Left colon (tissue), 2 donors: ENCODE measurements at regions of chr4 and their contacts with region 1.

Region 1: DNA sequence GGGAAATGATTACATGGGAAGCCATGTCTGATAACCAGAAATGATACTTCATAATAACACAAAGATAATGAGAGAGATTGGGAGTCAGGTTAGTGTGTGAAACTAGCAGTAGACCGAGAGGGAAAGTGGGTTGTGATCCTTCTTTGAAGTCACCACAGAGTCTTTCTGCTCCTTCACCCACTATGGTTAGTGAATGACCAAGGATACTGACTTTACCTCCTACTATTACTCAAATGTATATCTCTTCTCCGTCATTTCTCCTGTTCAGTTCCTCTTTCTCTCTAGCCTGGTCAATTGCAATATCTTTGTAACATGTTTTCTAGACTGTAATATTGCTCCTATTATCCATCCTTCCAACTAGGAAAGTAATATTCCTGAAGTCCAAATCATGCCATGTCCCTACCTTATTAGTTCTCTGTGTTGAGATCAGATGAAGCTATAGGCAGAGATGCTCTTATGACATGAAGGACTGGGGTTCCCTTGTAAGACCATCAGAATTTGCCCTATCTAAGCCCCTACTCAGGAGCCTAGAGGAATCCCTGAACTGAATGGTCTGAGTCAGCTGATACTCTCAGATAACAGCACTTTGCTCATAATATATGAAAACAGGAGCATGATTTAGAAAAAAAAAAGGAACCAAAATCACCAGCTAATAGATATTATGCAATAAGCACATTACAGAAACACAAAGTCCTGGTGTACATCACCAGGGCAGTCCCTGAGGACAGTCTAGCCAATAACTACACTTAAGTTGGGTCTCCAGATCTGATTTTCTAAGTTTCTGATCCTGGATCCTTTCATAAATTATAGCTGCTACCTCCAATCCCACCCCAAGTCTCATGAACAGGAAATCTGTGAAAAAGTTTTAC is 81.2 kb downstream of the SHROOM3 start:
- DNase-seq: no peak
- ATAC-seq: no peak

Region 2: GRCh38 chr4:76748649-76749048 is 232.4 kb after region 1 on chr4:
- intact Hi-C with region 1: loop called in 1 of 2 experiments (anchors 5 kb)
- DNase-seq: peak; percentile 63 to 65
- ATAC-seq: peak; percentile 86

Region 3: DNA sequence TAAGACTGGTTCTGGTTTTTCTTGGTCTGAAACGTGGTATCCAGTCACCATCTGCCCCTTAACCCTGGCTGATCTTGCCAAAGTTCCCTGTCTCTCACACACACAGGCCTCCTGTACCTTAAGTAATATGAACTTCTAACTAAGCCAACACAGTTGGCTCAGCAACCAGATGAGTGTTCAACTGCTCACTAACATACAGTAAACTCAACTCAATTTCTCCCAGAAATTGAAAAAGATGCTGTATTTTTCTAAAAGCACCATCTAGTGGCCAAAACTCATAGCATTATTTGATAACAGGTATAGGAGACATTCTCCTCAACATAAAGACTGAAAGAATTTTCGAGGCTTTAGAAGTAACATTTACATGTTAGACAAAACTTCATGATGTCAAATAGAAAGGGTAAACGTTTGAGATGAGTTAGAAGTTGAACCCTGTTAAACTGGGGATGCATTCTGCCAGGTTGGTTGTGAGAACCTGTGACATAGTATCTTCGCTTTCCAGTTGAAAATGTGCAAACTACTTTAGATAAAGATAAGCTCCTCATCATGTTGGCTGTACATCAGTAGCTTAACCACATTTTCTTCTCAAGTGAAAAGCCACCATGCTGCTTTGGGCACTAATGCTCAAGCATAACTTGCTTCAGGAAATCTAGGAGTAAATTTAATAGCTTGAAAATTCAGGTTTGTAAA is 528.4 kb after region 1 on chr4:
- intact Hi-C with region 1: loop called in 1 of 2 experiments (anchors 10 kb)
- DNase-seq: no peak
- ATAC-seq: peak; percentile 41

Region 4: GRCh38 chr4:77203380-77204197 is 687.4 kb after region 1 on chr4:
- intact Hi-C with region 1: loop called in 1 of 2 experiments (anchors 10 kb)
- DNase-seq: peak; percentile 47 to 62
- ATAC-seq: peak; percentile 71